ENCODE measurements at regions of chr12 and their contacts with region 1.

Region 1: GRCh38 chr12:7995266-7995963 is 37.1 kb upstream of the FOXJ2 start:
- DNase-seq: peak; percentile 91
- ATAC-seq: peak; percentile 95 to 97
- H3K4me3 ChIP-seq: no peak overlapping the region
- H3K27ac ChIP-seq: no peak overlapping the region
- H3K4me1 ChIP-seq: peaks cover 20% of the 10 kb centered on the region
- H3K27me3 ChIP-seq: no peaks in the 10 kb centered on the region
- CTCF ChIP-seq: peak; percentile 85

Region 2: GRCh38 chr12:7869127-7869526 is 126.3 kb before region 1 on chr12:
- intact Hi-C with region 1: loop called (anchors 10 kb)
- DNase-seq: no peak
- ATAC-seq: no peak
- H3K4me3 ChIP-seq: no peak overlapping the region
- H3K27ac ChIP-seq: no peak overlapping the region
- H3K4me1 ChIP-seq: no peaks in the 10 kb centered on the region
- H3K27me3 ChIP-seq: peaks cover 28% of the 10 kb centered on the region
- CTCF ChIP-seq: no peak

Region 3: GRCh38 chr12:7907009-7907408 is 88.4 kb before region 1 on chr12:
- intact Hi-C with region 1: no loop called
- DNase-seq: no peak
- ATAC-seq: peak; percentile 66 to 79
- H3K4me3 ChIP-seq: no peak overlapping the region
- H3K27ac ChIP-seq: no peak overlapping the region
- H3K4me1 ChIP-seq: no peaks in the 10 kb centered on the region
- H3K27me3 ChIP-seq: no peaks in the 10 kb centered on the region
- CTCF ChIP-seq: peak; percentile 12

Region 4: GRCh38 chr12:7933255-7933729 is 62.1 kb before region 1 on chr12:
- intact Hi-C with region 1: loop called (anchors 10 kb)
- DNase-seq: peak; percentile 66
- ATAC-seq: peak; percentile 87 to 90
- H3K4me3 ChIP-seq: peak overlapping the region; percentile 62
- H3K27ac ChIP-seq: peak overlapping the region; percentile 87
- H3K4me1 ChIP-seq: peaks cover 39% of the 10 kb centered on the region
- H3K27me3 ChIP-seq: no peaks in the 10 kb centered on the region
- CTCF ChIP-seq: peak; percentile 68